Endothelial cell of umbilical vein (primary cell): ENCODE measurements at regions of chr13 and their contacts with region 1.

Region 1: GRCh38 chr13:114314074-114314912 is at the start of gene CHAMP1:
- DNase-seq: peak; percentile 94
- H3K4me3 ChIP-seq: peak within 1 kb of the TSS; percentile 89 to 97 (median 89)
- H3K27ac ChIP-seq: peak within 1 kb of the TSS; percentile 40
- H3K4me1 ChIP-seq: peaks cover 17% of the 10 kb centered on the region
- H3K27me3 ChIP-seq: no peaks in the 10 kb centered on the region
- CTCF ChIP-seq: peak in 1 of 2 donors; percentile 18
- POLR2A ChIP-seq: peak; percentile 97
- total RNA-seq, gene CHAMP1: 21.2 and 24.1 TPM in 2 replicates

Region 2: GRCh38 chr13:114281351-114282040 is 32.8 kb before region 1 on chr13 and contains the start of gene UPF3A:
- CTCF ChIA-PET with region 1: no interaction called
- POLR2A ChIA-PET with region 1: no interaction called
- dilution Hi-C with region 1: no loop called
- intact Hi-C with region 1: loop called (anchors 1 kb)
- DNase-seq: peak; percentile 89
- H3K4me3 ChIP-seq: peak within 1 kb of the TSS; percentile 63 to 84 (median 79)
- H3K27ac ChIP-seq: peak within 1 kb of the TSS; percentile 89
- H3K4me1 ChIP-seq: peaks cover 9% of the 10 kb centered on the region
- H3K27me3 ChIP-seq: no peaks in the 10 kb centered on the region
- CTCF ChIP-seq: no peak
- POLR2A ChIP-seq: peak; percentile 66
- total RNA-seq, gene UPF3A: 74.4 and 75.4 TPM in 2 replicates